Sigmoid colon (tissue), 7 donors: ENCODE measurements at regions of chr15 and their contacts with region 1.

Region 1: GRCh38 chr15:74956648-74957300 is at the start of gene RPP25:
- DNase-seq: peak; percentile 90
- H3K4me3 ChIP-seq: peak within 1 kb of the TSS; percentile 33 to 65 (median 56)
- H3K27ac ChIP-seq: peak within 1 kb of the TSS; percentile 68 to 84 (median 70)
- H3K4me1 ChIP-seq: peaks cover 0 to 51% (median 40%) of the 10 kb centered on the region in 4 donors
- H3K27me3 ChIP-seq: peaks cover 20 to 63% (median 30%) of the 10 kb centered on the region in 3 donors
- CTCF ChIP-seq: no peak
- EP300 ChIP-seq: no peak
- POLR2A ChIP-seq: no peak
- total RNA-seq, gene RPP25: 3.7 to 4.8 (median 4.7) TPM

Region 2: DNA sequence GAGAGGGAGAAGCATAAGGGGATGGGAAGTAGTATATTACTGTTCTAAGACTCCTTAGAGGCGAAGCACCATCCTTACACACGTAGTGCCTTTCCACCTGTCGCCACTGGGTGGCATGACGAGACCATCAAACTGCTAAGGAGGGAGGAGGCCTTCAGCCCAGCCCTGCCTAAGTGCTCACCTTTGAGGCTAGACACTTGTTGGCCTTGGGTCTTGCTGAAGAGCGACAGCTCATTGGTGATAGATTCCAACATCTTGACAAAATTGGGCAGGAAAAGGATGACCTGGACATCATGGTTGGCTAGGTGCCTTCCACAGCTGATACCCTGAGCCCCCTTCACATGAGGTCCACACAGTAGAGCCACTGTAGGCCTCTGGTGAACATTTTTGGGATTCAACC is 321.5 kb before region 1 on chr15:
- intact Hi-C with region 1: loop called (anchors 10 kb)
- DNase-seq: no peak
- H3K4me3 ChIP-seq: no peak overlapping the region
- H3K27ac ChIP-seq: no peak overlapping the region
- H3K4me1 ChIP-seq: no peaks in the 10 kb centered on the region
- H3K27me3 ChIP-seq: no peaks in the 10 kb centered on the region
- CTCF ChIP-seq: peak; percentile 72 to 88 (median 84)
- EP300 ChIP-seq: no peak
- POLR2A ChIP-seq: no peak

Region 3: GRCh38 chr15:75023181-75023871 is 66.6 kb after region 1 on chr15 and contains the start of gene PPCDC:
- intact Hi-C with region 1: loop called (anchors 2 kb)
- DNase-seq: peak; percentile 98
- H3K4me3 ChIP-seq: peak within 1 kb of the TSS; percentile 76 to 94 (median 85)
- H3K27ac ChIP-seq: peak within 1 kb of the TSS; percentile 86 to 90 (median 87)
- H3K4me1 ChIP-seq: peaks cover 0 to 24% (median 12%) of the 10 kb centered on the region in 4 donors
- H3K27me3 ChIP-seq: no peaks in the 10 kb centered on the region
- CTCF ChIP-seq: no peak
- EP300 ChIP-seq: no peak
- POLR2A ChIP-seq: peak; percentile 83 to 92
- total RNA-seq, gene PPCDC: 7.9 to 18.9 (median 12.0) TPM

Region 4: DNA sequence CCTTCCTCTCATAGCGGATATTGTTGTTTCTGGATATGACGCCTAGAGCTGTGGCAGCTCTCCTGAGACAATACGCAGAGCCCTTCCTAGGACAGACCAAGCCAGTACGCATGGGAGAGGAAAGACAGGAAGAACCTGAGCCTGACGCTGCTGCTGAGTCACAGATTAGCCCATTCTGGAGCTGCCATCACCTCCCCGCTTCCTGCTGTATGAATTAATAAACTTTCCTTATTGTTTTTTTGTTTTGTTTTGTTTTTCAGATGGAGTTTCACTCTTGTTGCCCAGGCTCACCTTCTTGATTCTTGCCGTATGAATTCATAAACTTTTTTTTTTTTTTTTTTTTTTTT is 133.6 kb after region 1 on chr15:
- intact Hi-C with region 1: no loop called
- DNase-seq: peak; percentile 79
- H3K4me3 ChIP-seq: no peak overlapping the region
- H3K27ac ChIP-seq: peak overlapping the region in 3 of 4 donors; percentile 14 to 79 (median 62)
- H3K4me1 ChIP-seq: peaks cover 0 to 11% (median 2%) of the 10 kb centered on the region in 4 donors
- H3K27me3 ChIP-seq: no peaks in the 10 kb centered on the region
- CTCF ChIP-seq: no peak
- EP300 ChIP-seq: peak in 2 of 4 donors; percentile 75 to 90
- POLR2A ChIP-seq: no peak